Esophagus squamous epithelium (tissue), 5 donors: ENCODE measurements at regions of chr11 and their contacts with region 1.

Region 1: GRCh38 chr11:1694064-1694845 is 2.7 kb upstream of the KRTAP5-6 start:
- DNase-seq: peak; percentile 28
- H3K4me3 ChIP-seq: peak overlapping the region in 3 of 4 donors; percentile 3 to 58 (median 36)
- H3K27ac ChIP-seq: peak overlapping the region in 3 of 4 donors; percentile 51 to 65 (median 53)
- H3K4me1 ChIP-seq: peaks cover 10 to 19% (median 10%) of the 10 kb centered on the region in 3 donors
- H3K27me3 ChIP-seq: peaks cover 0 to 37% (median 0%) of the 10 kb centered on the region in 4 donors
- CTCF ChIP-seq: peak; percentile 88 to 95 (median 94)
- POLR2A ChIP-seq: no peak

Region 2: GRCh38 chr11:1652771-1653540 is 41.3 kb before region 1 on chr11:
- intact Hi-C with region 1: loop called (anchors 5 kb)
- DNase-seq: no peak
- H3K4me3 ChIP-seq: no peak overlapping the region
- H3K27ac ChIP-seq: no peak overlapping the region
- H3K4me1 ChIP-seq: peaks cover 4 to 32% (median 4%) of the 10 kb centered on the region in 3 donors
- H3K27me3 ChIP-seq: peaks cover 0 to 41% (median 0%) of the 10 kb centered on the region in 4 donors
- CTCF ChIP-seq: peak; percentile 94 to 99 (median 98)
- POLR2A ChIP-seq: no peak

Region 3: DNA sequence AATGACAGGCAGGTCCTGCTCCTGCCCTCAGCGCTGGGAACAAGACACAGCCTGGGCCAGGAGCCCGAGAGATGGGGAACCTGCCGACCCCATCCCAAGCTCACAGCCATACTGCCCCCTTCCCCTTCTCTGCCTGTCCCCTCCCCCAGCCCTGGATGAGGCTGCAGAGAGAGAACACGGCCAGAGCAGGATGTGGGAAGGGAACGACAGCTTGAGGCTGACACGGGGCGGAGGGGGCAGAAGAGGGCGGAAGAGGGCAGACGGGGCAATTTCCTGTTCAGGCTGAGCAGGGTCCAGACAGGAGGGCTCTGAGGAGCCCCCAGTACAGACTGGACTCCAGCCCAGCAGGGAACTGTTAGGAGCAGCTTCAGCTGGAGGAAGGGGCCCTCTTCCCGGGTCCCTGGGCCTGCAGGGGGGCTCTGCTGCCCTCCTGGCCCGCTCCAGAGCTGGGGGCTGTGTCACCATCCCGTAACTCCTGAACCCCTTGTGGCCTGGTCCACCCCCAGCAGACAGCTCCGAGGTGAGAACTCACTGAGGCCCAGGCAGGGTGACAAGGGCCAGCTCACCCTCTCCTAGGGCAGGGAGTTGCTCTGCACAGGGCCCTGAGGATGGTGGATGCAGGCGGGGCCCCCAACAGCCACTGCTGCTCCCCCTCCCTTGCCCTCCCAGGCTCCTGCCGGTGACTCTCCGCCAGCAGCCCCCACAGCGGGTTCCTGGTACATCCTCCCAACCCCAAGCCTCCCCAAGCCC is 63.8 kb after region 1 on chr11:
- intact Hi-C with region 1: no loop called
- DNase-seq: no peak
- H3K4me3 ChIP-seq: peak overlapping the region in 2 of 4 donors; percentile 7 to 29
- H3K27ac ChIP-seq: peak overlapping the region; percentile 28 to 96 (median 46)
- H3K4me1 ChIP-seq: peaks cover 53 to 90% (median 59%) of the 10 kb centered on the region in 3 donors
- H3K27me3 ChIP-seq: no peaks in the 10 kb centered on the region
- CTCF ChIP-seq: no peak
- POLR2A ChIP-seq: no peak

Region 4: DNA sequence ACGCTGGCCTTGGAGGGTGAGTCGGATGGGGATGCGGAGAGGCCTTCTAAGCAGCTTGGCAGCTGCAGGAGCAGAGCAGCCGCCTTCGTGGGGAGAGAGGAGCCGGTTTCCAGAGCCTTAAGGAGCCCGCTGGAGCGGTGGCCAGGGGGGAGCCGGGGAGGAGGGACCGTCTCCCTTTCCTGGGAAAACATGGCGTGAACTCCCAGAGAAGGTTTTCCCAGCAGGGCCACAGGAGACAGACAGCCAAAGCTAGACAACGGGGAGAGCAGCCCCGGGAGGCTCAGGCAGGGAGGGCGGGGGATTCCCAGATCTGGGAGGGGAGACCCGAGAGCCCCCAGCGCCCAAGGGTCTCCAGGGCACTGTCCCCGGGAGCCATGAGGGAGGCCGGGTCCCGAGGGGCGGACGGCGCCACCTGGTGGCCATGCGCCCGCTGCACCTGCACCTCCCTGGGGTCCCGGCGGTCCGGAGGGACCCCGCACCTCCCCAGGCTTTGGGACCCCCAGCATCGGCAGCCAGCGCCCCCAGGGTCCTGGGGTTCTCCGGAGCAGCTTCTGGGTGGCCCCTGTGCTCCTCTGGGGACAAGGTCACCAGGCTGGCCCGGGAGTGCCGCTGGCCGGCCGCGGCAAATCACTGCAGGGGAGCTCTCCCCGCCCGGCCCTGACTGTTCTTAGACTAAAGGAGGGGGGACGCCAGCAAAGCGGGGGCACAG is 138.1 kb after region 1 on chr11:
- intact Hi-C with region 1: loop called (anchors 5 kb)
- DNase-seq: no peak
- H3K4me3 ChIP-seq: peak overlapping the region in 3 of 4 donors; percentile 29 to 49 (median 38)
- H3K27ac ChIP-seq: peak overlapping the region; percentile 36 to 94 (median 91)
- H3K4me1 ChIP-seq: peaks cover 30 to 98% (median 47%) of the 10 kb centered on the region in 3 donors
- H3K27me3 ChIP-seq: peaks cover 0 to 32% (median 0%) of the 10 kb centered on the region in 4 donors
- CTCF ChIP-seq: peak; percentile 98 to 99 (median 98)
- POLR2A ChIP-seq: no peak

Region 5: DNA sequence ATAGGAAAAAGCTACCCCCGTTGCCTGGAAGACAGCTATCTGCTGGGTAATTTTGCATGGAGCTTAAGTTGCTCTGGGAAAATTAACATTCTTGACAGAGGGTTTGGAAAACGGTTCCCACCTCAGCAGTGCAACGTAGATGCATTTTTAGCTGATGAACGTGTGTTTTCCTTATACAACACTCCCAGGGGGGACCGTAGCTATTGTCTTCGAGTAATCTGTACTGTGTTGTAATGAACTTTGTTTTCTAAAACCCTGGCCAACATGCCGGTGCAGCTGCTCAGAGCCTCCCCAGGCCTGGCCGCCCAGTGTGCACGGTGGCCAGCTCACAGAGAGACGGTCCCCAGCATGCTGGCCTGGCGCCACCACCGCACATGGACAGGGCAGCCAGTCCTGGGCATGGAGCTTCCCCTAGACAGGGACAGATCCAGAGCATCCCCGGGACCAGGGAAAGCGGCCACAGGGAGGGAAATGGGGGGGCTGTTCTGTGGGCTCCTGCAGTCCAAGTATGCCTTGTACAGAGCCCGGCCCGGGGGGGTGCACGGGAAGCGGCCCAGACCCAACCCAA is 227.4 kb after region 1 on chr11:
- intact Hi-C with region 1: loop called (anchors 10 kb)
- DNase-seq: no peak
- H3K4me3 ChIP-seq: no peak overlapping the region
- H3K27ac ChIP-seq: peak overlapping the region in 3 of 4 donors; percentile 51 to 72 (median 55)
- H3K4me1 ChIP-seq: peaks cover 12 to 86% (median 30%) of the 10 kb centered on the region in 3 donors
- H3K27me3 ChIP-seq: peaks cover 0 to 19% (median 0%) of the 10 kb centered on the region in 4 donors
- CTCF ChIP-seq: no peak
- POLR2A ChIP-seq: no peak

Region 6: GRCh38 chr11:2151500-2152257 is 457.4 kb after region 1 on chr11:
- intact Hi-C with region 1: loop called (anchors 10 kb)
- DNase-seq: no peak
- H3K4me3 ChIP-seq: peak overlapping the region in 1 of 4 donors; percentile 18
- H3K27ac ChIP-seq: peak overlapping the region in 1 of 4 donors; percentile 6
- H3K4me1 ChIP-seq: peaks cover 4 to 14% (median 6%) of the 10 kb centered on the region in 3 donors
- H3K27me3 ChIP-seq: peaks cover 0 to 81% (median 9%) of the 10 kb centered on the region in 4 donors
- CTCF ChIP-seq: peak; percentile 69 to 95 (median 89)
- POLR2A ChIP-seq: no peak